ENCODE measurements at regions of chr2 and their contacts with region 1.

Region 1: GRCh38 chr2:106193977-106194778 is at the start of gene UXS1:
- DNase-seq: peak; percentile 99
- H3K4me3 Mint-ChIP-seq: peak within 1 kb of the TSS; percentile 90
- H3K27ac Mint-ChIP-seq: peak within 1 kb of the TSS; percentile 89
- H3K4me1 Mint-ChIP-seq: peaks cover 38% of the 10 kb centered on the region
- H3K27me3 Mint-ChIP-seq: peaks cover 11% of the 10 kb centered on the region
- total RNA-seq, gene UXS1: 34.9 and 37.6 TPM in 2 replicates

Region 2: GRCh38 chr2:105037572-105038382 is 1156.4 kb before region 1 on chr2 and contains the start of gene MRPS9:
- intact Hi-C with region 1: loop called (anchors 5 kb)
- DNase-seq: peak; percentile 99
- H3K4me3 Mint-ChIP-seq: peak within 1 kb of the TSS; percentile 96
- H3K27ac Mint-ChIP-seq: peak within 1 kb of the TSS; percentile 91
- H3K4me1 Mint-ChIP-seq: peaks cover 20% of the 10 kb centered on the region
- H3K27me3 Mint-ChIP-seq: no peaks in the 10 kb centered on the region
- total RNA-seq, gene MRPS9: 32.4 and 33.3 TPM in 2 replicates

Region 3: GRCh38 chr2:105645031-105645937 is 548.9 kb before region 1 on chr2:
- intact Hi-C with region 1: loop called (anchors 2 kb)
- DNase-seq: peak; percentile 47
- H3K4me3 Mint-ChIP-seq: no peak overlapping the region
- H3K27ac Mint-ChIP-seq: no peak overlapping the region
- H3K4me1 Mint-ChIP-seq: no peaks in the 10 kb centered on the region
- H3K27me3 Mint-ChIP-seq: peaks cover 31% of the 10 kb centered on the region

Region 4: GRCh38 chr2:105858868-105859693 is 335.1 kb before region 1 on chr2:
- intact Hi-C with region 1: loop called (anchors 2 kb)
- DNase-seq: peak; percentile 67
- H3K4me3 Mint-ChIP-seq: peak overlapping the region; percentile 74
- H3K27ac Mint-ChIP-seq: peak overlapping the region; percentile 92
- H3K4me1 Mint-ChIP-seq: peaks cover 77% of the 10 kb centered on the region
- H3K27me3 Mint-ChIP-seq: no peaks in the 10 kb centered on the region

Region 5: DNA sequence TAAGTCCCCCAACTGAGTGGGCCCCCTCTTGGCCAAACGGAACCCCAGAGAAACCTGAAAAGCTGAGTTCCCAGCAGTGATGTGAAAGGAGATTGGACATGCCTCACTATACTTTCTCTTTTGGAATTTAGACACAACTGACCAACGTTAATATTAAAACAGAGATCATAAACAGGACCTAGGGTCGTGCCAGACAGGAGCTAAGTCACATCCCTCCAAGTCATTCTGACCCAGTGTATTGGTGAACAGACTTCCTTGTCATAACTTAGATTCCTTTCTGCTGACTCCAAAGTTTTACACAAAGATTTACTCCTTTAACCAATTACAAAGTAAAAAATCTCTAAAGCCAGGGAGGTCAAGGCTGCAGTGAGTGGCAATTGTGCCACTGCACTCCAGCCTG is 47.0 kb before region 1 on chr2:
- intact Hi-C with region 1: loop called (anchors 10 kb)
- DNase-seq: no peak
- H3K4me3 Mint-ChIP-seq: no peak overlapping the region
- H3K27ac Mint-ChIP-seq: peak overlapping the region; percentile 42
- H3K4me1 Mint-ChIP-seq: peaks cover 39% of the 10 kb centered on the region
- H3K27me3 Mint-ChIP-seq: no peaks in the 10 kb centered on the region

Region 6: GRCh38 chr2:106269591-106270291 is 75.6 kb after region 1 on chr2:
- intact Hi-C with region 1: loop called (anchors 1 kb)
- DNase-seq: peak; percentile 75
- H3K4me3 Mint-ChIP-seq: peak overlapping the region; percentile 87
- H3K27ac Mint-ChIP-seq: peak overlapping the region; percentile 48
- H3K4me1 Mint-ChIP-seq: peaks cover 18% of the 10 kb centered on the region
- H3K27me3 Mint-ChIP-seq: peaks cover 24% of the 10 kb centered on the region

Measured in activated CD4-positive, alpha-beta T cell treated with anti-CD3 and anti-CD28 coated beads, Interleukin-2, amount 10 ng/mL, durations not matched to agents 24 days and 14 days (primary cell).